T-cell (primary cell): ENCODE measurements at regions of chr17 and their contacts with region 1.

Region 1: GRCh38 chr17:59372138-59372857 is 40.8 kb downstream of the YPEL2 start:
- DNase-seq: no peak
- ATAC-seq: no peak
- H3K4me3 ChIP-seq: no peak overlapping the region
- H3K4me3 Mint-ChIP-seq: peak overlapping the region in 1 of 3 donors; percentile 64
- H3K27ac ChIP-seq: no peak overlapping the region
- H3K27ac Mint-ChIP-seq: peak overlapping the region; percentile 92 to 94
- H3K4me1 ChIP-seq: peaks cover 23 to 48% of the 10 kb centered on the region in 2 experiments
- H3K4me1 Mint-ChIP-seq: peaks cover 78 to 87% (median 85%) of the 10 kb centered on the region in 3 donors
- H3K27me3 ChIP-seq: no peaks in the 10 kb centered on the region
- H3K27me3 Mint-ChIP-seq: no peaks in the 10 kb centered on the region

Region 2: GRCh38 chr17:59763861-59764260 is 391.6 kb after region 1 on chr17:
- CTCF ChIA-PET with region 1: no interaction called
- POLR2A ChIA-PET with region 1: interaction called in 1 of 2 experiments, 15 read pairs
- DNase-seq: no peak
- ATAC-seq: no peak
- H3K4me3 ChIP-seq: no peak overlapping the region
- H3K4me3 Mint-ChIP-seq: no peak overlapping the region
- H3K27ac ChIP-seq: no peak overlapping the region
- H3K27ac Mint-ChIP-seq: no peak overlapping the region
- H3K4me1 ChIP-seq: no peaks in the 10 kb centered on the region
- H3K4me1 Mint-ChIP-seq: peaks cover 19 to 26% (median 25%) of the 10 kb centered on the region in 3 donors
- H3K27me3 ChIP-seq: no peaks in the 10 kb centered on the region
- H3K27me3 Mint-ChIP-seq: no peaks in the 10 kb centered on the region